PC-9 (cell line): ENCODE measurements at regions of chr15 and their contacts with region 1.

Region 1: DNA sequence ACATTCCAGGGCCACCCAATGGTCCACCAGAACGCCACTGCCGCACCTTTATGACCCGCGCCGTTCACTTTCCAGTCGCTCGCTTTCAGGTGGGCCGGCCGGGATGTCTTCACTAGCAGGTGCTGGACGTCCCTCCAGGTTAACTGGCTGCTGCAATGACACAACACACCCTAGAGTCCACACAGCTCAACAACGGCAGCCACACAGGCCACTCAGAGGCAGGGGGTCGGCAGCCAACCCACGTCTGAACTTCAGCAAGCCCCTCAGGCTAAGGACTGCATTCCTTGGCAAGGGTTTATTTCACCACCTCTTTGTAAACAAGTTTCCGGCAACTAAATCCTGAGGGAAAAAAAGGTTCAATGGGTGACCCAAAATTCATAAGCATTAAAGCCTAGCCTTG is 89.2 kb upstream of the SNRPA1 start:
- DNase-seq: no peak
- H3K4me3 ChIP-seq: no peak overlapping the region
- H3K27ac ChIP-seq: no peak overlapping the region
- H3K4me1 ChIP-seq: no peaks in the 10 kb centered on the region
- H3K27me3 ChIP-seq: no peaks in the 10 kb centered on the region
- CTCF ChIP-seq: no peak

Region 2: DNA sequence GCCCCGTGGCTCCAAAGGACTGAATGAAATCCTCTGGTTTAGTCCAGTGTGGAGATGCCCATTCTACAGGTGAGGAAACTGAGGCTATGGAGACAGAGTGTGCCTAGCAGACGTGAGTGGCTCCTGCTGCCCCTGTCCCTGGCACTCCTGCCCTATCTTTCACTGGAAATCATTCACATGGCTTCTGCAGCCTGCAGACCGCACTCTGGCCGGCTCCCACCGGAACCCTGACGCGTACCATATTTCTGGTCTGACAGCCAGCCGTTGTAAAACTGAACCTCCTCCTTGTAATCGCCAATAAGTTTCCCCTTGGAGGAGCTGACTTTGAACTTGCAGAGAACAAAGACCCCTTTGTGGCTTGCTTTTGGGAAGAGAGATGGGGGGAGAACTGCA is 268.9 kb before region 1 on chr15:
- CTCF ChIA-PET with region 1: interaction called, 22 read pairs
- POLR2A ChIA-PET with region 1: no interaction called
- intact Hi-C with region 1: no loop called
- DNase-seq: no peak
- H3K4me3 ChIP-seq: no peak overlapping the region
- H3K27ac ChIP-seq: no peak overlapping the region
- H3K4me1 ChIP-seq: no peaks in the 10 kb centered on the region
- H3K27me3 ChIP-seq: no peaks in the 10 kb centered on the region
- CTCF ChIP-seq: no peak

Region 3: GRCh38 chr15:101372149-101372577 is 12.1 kb before region 1 on chr15:
- CTCF ChIA-PET with region 1: no interaction called
- POLR2A ChIA-PET with region 1: no interaction called
- intact Hi-C with region 1: no loop called
- DNase-seq: no peak
- H3K4me3 ChIP-seq: no peak overlapping the region
- H3K27ac ChIP-seq: no peak overlapping the region
- H3K4me1 ChIP-seq: no peaks in the 10 kb centered on the region
- H3K27me3 ChIP-seq: no peaks in the 10 kb centered on the region
- CTCF ChIP-seq: no peak

Region 4: GRCh38 chr15:101420232-101420631 is 36.0 kb after region 1 on chr15:
- CTCF ChIA-PET with region 1: no interaction called
- POLR2A ChIA-PET with region 1: interaction called, 15 read pairs
- intact Hi-C with region 1: no loop called
- DNase-seq: no peak
- H3K4me3 ChIP-seq: no peak overlapping the region
- H3K27ac ChIP-seq: no peak overlapping the region
- H3K4me1 ChIP-seq: no peaks in the 10 kb centered on the region
- H3K27me3 ChIP-seq: no peaks in the 10 kb centered on the region
- CTCF ChIP-seq: no peak